Activated CD4-positive, alpha-beta T cell treated with anti-CD3 and anti-CD28 coated beads for 36 hours (primary cell): ENCODE measurements at regions of chr2 and their contacts with region 1.

Region 1: DNA sequence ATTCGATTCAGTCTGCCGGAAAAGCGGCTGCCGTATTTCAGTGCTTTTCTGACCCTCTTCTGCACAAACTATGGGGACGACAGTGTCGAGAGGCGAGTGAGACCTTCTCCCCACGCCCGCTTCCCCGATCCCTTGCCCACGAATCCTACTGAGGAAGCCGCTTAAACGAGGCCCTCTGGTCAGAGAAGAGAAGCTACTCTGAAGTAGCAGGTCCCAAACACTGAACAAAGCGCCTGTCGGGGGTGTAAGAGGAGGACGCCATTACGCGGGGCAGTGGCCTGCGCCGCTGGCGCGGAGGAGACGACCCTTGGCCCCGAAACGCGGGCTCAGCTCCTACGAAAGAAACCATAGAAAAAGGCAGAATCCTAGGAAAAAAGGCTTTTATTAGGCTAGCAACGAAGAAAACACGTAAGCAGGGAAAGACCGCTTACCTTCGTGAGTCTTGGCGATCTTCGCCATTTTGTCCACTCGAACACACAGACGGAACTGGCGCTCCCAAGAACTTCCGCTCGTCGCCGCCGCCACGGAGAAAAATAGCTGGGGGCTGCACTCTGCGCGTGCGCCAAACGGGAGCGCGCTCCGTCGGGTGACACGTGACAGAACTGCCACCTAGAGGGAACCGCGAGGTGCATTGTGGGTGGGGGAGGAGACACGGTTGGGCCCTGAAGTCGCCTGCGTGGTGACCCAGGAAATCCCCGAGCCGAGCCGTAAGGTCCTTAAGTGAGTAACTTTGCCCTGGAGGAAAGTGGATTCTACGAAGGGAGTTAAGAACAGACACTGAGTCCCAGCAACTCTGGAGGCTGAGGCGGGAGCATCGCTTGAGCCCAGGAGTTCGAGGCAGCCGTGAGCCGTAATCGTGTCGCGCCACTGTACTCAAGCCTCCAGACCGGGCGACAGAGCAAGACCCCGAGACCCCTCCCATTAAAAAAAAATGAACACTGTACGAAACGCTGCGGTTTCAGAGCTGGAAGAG is at the start of gene SF3B1:
- DNase-seq: peak; percentile 100
- ATAC-seq: peak; percentile 94
- H3K4me3 Mint-ChIP-seq: peak within 1 kb of the TSS; percentile 98
- H3K27ac Mint-ChIP-seq: peak within 1 kb of the TSS; percentile 99
- H3K4me1 Mint-ChIP-seq: peaks cover 44% of the 10 kb centered on the region
- H3K27me3 Mint-ChIP-seq: no peaks in the 10 kb centered on the region
- total RNA-seq, gene SF3B1: 262 to 277 TPM

Region 2: DNA sequence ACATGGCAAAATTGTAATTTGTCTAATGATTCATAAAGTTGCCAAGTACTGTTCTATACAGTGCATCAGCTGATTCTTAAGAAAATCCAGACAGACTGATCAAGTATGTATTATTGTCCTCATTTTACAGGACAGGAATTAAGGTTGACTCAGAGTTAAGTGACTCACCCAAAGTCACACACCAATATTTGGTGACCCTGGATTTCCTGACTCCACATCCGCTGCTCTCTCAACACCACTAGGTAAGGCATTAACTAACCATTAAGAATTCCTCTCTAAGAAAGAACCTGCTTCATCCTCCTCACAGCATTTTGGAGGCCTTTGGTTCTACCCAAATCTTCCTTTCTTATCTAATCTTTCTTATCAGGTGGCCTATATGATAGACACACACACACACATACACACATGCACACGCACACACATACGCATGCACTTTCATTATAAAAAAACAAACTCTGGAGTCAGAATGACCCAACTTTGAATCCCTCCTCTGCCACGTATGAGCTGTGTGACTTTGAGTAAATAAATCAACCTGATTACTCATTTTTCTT is 275.1 kb before region 1 on chr2:
- CTCF ChIA-PET with region 1: no interaction called
- POLR2A ChIA-PET with region 1: no interaction called
- intact Hi-C with region 1: no loop called
- DNase-seq: peak; percentile 50
- ATAC-seq: peak; percentile 85
- H3K4me3 Mint-ChIP-seq: peak overlapping the region; percentile 14
- H3K27ac Mint-ChIP-seq: peak overlapping the region; percentile 91
- H3K4me1 Mint-ChIP-seq: peaks cover 75% of the 10 kb centered on the region
- H3K27me3 Mint-ChIP-seq: no peaks in the 10 kb centered on the region

Region 3: GRCh38 chr2:197453161-197453914 is 18.5 kb after region 1 on chr2 and contains the start of gene COQ10B:
- CTCF ChIA-PET with region 1: interaction called, 6 read pairs
- POLR2A ChIA-PET with region 1: interaction called, 21 read pairs
- intact Hi-C with region 1: loop called (anchors 1 kb)
- DNase-seq: peak; percentile 99
- ATAC-seq: peak; percentile 93
- H3K4me3 Mint-ChIP-seq: peak within 1 kb of the TSS; percentile 90
- H3K27ac Mint-ChIP-seq: peak within 1 kb of the TSS; percentile 96
- H3K4me1 Mint-ChIP-seq: peaks cover 42% of the 10 kb centered on the region
- H3K27me3 Mint-ChIP-seq: no peaks in the 10 kb centered on the region
- total RNA-seq, gene COQ10B: 9.7 to 13.3 TPM